ENCODE measurements at regions of chr5 and their contacts with region 1.

Region 1: GRCh38 chr5:176573564-176574296 is 24.6 kb downstream of the CDHR2 start:
- DNase-seq: peak; percentile 93
- H3K4me3 Mint-ChIP-seq: no peak overlapping the region
- H3K27ac Mint-ChIP-seq: no peak overlapping the region
- H3K4me1 Mint-ChIP-seq: peaks cover 6% of the 10 kb centered on the region
- H3K27me3 Mint-ChIP-seq: peaks cover 9% of the 10 kb centered on the region

Region 2: GRCh38 chr5:176519810-176520720 is 53.7 kb before region 1 on chr5:
- intact Hi-C with region 1: no loop called
- DNase-seq: no peak
- H3K4me3 Mint-ChIP-seq: no peak overlapping the region
- H3K27ac Mint-ChIP-seq: no peak overlapping the region
- H3K4me1 Mint-ChIP-seq: peaks cover 7% of the 10 kb centered on the region
- H3K27me3 Mint-ChIP-seq: no peaks in the 10 kb centered on the region

Region 3: GRCh38 chr5:176619203-176619568 is 45.5 kb after region 1 on chr5:
- intact Hi-C with region 1: loop called (anchors 1 kb)
- DNase-seq: peak; percentile 94
- H3K4me3 Mint-ChIP-seq: peak overlapping the region; percentile 43
- H3K27ac Mint-ChIP-seq: no peak overlapping the region
- H3K4me1 Mint-ChIP-seq: peaks cover 9% of the 10 kb centered on the region
- H3K27me3 Mint-ChIP-seq: peaks cover 76% of the 10 kb centered on the region